ENCODE measurements at regions of chr16 and their contacts with region 1.

Region 1: DNA sequence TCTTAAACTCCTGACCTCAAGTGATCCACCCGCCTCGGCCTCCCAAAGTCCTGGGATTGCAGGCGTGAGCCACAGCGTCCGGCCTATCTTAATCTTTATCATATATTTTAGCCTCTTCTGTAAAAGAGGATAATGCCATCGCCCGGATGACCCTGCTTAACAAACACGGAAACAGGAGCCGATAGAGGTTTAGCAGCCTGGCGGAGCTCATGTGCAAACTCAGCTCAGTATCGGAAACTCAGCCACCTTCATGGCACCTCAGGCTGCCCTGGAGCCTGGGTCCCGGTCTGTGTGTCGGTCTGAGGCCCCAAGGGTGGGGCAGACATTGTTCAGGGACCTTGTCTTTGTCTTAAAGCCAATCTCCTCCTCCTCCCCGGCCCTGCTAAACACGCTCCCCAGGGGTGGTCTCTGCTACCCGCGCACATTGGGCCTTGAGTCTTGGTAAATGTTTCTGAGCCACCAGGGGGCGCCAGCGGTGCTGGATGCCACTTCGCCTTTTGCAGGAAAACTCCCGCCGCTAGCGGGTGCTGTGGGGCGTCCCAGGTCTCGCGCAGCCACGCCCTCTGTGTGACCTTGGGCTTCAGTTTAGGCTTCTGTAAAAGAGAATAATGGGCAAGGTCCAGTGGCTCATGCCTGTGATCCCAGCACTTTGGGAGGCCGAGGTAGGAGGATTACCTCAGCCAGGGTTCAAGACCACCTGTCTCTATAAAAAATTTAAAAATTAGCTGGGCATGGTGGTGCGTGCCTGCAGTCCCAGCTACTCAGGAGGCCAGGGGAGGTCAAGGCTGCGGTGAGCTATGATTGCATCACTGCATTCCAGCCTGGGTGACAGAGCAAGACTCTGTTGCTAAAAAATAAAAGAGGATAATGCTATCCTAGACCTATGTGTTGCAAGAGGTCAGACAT is 2.7 kb downstream of the CETP start:
- DNase-seq: peak; percentile 97
- H3K4me3 Mint-ChIP-seq: no peak overlapping the region
- H3K27ac Mint-ChIP-seq: peak overlapping the region; percentile 11
- H3K4me1 Mint-ChIP-seq: peaks cover 19% of the 10 kb centered on the region
- H3K27me3 Mint-ChIP-seq: no peaks in the 10 kb centered on the region

Region 2: GRCh38 chr16:56477096-56477878 is 487.2 kb before region 1 on chr16:
- CTCF ChIA-PET with region 1: no interaction called
- POLR2A ChIA-PET with region 1: no interaction called
- intact Hi-C with region 1: no loop called
- DNase-seq: peak; percentile 35
- H3K4me3 Mint-ChIP-seq: no peak overlapping the region
- H3K27ac Mint-ChIP-seq: peak overlapping the region; percentile 77
- H3K4me1 Mint-ChIP-seq: peaks cover 19% of the 10 kb centered on the region
- H3K27me3 Mint-ChIP-seq: no peaks in the 10 kb centered on the region

Region 3: DNA sequence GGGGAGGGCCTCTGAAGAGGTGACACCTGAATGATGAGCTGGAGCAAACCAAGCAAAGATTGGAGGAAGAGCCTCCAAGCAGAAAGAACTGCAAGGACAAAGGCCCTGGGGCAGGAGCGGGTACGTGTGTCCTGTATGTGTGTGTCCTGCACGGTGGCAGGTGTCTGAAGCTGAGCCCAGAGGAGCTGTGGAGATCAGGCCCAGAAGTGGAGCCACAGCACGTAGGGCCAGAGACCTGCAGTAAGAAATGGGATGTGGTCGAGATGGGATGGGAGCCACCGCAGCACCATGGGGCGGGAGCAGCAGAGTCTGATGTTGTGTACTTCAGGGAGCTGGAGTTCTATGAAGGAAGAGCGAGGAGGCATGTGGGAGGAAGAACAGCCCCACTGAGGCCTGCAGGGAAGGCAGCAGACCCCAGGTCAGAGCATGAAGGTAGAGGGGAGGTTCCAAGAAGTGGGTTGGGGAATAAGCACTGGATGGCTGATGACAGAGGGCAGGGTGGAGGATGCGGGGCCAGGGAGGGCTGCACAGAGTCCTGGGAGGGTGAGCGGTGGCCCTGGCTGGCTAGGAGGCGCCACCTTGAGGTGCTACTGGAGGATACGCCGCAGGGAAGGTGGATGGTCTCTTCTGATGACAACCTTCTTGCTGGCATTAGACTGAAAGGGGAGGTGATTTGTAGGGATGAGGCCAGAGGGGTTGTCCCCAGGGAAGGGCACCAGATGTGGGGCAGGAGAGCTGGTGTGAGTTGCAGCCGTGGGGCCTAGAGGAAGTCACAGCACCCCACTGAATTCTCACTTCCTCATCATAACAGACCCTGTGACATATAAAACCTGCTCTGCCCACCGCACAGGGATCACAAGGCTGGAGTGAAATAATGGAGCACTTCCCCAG is 13.4 kb before region 1 on chr16:
- CTCF ChIA-PET with region 1: interaction called, 72 read pairs
- POLR2A ChIA-PET with region 1: no interaction called
- intact Hi-C with region 1: no loop called
- DNase-seq: peak; percentile 77
- H3K4me3 Mint-ChIP-seq: no peak overlapping the region
- H3K27ac Mint-ChIP-seq: no peak overlapping the region
- H3K4me1 Mint-ChIP-seq: peaks cover 19% of the 10 kb centered on the region
- H3K27me3 Mint-ChIP-seq: no peaks in the 10 kb centered on the region

Region 4: GRCh38 chr16:57000271-57001025 is 36.0 kb after region 1 on chr16:
- CTCF ChIA-PET with region 1: interaction called, 14 read pairs
- POLR2A ChIA-PET with region 1: no interaction called
- intact Hi-C with region 1: no loop called
- DNase-seq: peak; percentile 86
- H3K4me3 Mint-ChIP-seq: peak overlapping the region; percentile 64
- H3K27ac Mint-ChIP-seq: peak overlapping the region; percentile 99
- H3K4me1 Mint-ChIP-seq: peaks cover 95% of the 10 kb centered on the region
- H3K27me3 Mint-ChIP-seq: no peaks in the 10 kb centered on the region

Region 5: DNA sequence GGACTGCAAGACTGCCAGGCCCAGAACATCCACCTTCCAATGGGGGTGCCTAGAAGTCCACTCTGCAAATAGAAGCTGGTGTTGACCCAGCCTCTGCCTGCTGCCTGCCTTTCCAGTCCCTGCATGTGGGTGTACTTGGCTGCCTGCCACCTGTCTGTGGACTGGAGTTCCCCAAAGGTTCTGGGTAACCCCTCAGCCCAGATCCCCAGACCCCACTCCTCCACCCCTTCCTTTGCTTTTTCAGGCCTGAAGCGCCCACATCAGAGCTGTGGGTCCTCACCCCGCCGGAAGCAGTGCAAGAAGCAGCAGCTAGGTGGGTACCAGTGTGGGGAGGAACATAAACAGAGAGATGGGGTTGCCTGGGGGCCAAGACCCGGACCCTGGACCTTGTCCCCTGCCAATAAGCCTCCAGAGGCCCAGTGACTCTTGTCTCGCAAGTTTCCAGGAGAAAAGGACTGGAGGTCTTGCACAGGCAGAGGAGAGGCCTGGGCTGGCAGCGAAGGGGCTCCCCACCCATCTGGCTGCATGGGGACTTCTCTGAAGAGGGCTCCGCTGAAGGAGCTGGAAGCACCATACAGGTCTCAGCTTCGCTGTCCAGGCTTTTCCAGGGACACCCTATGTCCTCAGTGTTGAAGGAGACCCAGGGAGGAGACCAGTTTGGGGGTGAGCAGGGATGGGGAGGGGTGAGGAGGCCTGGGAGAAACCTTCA is 59.2 kb after region 1 on chr16:
- CTCF ChIA-PET with region 1: interaction called, 18 read pairs
- POLR2A ChIA-PET with region 1: no interaction called
- intact Hi-C with region 1: no loop called
- DNase-seq: peak; percentile 84
- H3K4me3 Mint-ChIP-seq: peak overlapping the region; percentile 18
- H3K27ac Mint-ChIP-seq: peak overlapping the region; percentile 65
- H3K4me1 Mint-ChIP-seq: peaks cover 90% of the 10 kb centered on the region
- H3K27me3 Mint-ChIP-seq: no peaks in the 10 kb centered on the region

Region 6: GRCh38 chr16:57061084-57061905 is 96.8 kb after region 1 on chr16:
- CTCF ChIA-PET with region 1: interaction called, 15 read pairs
- POLR2A ChIA-PET with region 1: no interaction called
- intact Hi-C with region 1: no loop called
- DNase-seq: no peak
- H3K4me3 Mint-ChIP-seq: no peak overlapping the region
- H3K27ac Mint-ChIP-seq: peak overlapping the region; percentile 63
- H3K4me1 Mint-ChIP-seq: peaks cover 2% of the 10 kb centered on the region
- H3K27me3 Mint-ChIP-seq: no peaks in the 10 kb centered on the region

Region 7: GRCh38 chr16:57091975-57092785 is 127.7 kb after region 1 on chr16 and contains the start of gene CPNE2:
- CTCF ChIA-PET with region 1: interaction called, 17 read pairs
- POLR2A ChIA-PET with region 1: no interaction called
- intact Hi-C with region 1: no loop called
- DNase-seq: peak; percentile 52
- H3K4me3 Mint-ChIP-seq: peak within 1 kb of the TSS; percentile 72
- H3K27ac Mint-ChIP-seq: no peak within 1 kb of the TSS
- H3K4me1 Mint-ChIP-seq: peaks cover 9% of the 10 kb centered on the region
- H3K27me3 Mint-ChIP-seq: peaks cover 7% of the 10 kb centered on the region
- total RNA-seq, gene CPNE2: 7.3 to 8.1 TPM

Measured in activated CD4-positive, alpha-beta memory T cell treated with anti-CD3 and anti-CD28 coated beads for 36 hours (primary cell).